Activated T-helper 2 cell treated with anti-CD3 and anti-CD28 coated beads, Interferon-gamma antibody, Interleukin-2, Interleukin-4, amounts not matched to agents 10 μg/mL and 5 μg/mL and 100 μg/mL, durations not matched to agents 14 hours and 24 hours and 36 hours (primary cell): ENCODE measurements at regions of chr13 and their contacts with region 1.

Region 1: DNA sequence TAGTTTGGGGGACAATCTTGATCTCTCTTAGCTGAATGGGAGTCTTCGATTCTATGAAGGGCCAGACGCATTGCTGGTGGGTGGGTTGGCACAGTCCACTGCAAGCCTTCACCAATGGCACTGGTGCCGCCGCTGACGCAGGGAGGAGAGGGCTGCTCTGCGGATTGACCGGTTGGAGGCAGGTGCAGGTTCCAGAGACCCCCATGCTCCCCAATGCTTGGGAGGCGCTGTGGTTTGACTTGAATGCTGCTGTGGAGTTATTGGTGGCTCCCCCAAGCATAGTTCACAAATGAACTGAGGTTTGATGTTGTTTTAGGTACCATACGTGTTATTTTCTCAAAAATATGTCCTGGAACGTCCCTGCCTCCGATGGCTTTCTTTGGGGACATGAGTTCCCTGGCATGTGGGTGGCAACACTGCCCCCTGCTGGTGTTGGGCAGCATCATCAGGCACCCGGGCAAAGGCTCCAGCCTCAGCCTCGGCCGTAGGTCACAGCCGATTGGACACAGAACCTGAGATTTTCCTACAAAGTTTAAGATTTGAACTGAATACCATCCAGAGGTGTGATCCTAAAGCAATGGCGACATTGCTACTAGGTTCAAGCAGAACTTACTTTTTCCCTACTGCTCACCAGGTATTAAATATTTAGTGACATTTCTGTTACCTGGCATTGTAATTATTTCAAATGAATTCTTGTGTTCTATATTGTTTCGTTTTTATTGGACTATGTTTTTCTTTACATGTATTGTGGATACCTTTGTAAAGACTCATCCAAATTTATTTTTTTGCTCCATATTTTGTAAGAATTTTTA is 95.5 kb downstream of the ANKRD10 start:
- DNase-seq: peak; percentile 58
- H3K4me3 Mint-ChIP-seq: no peak overlapping the region
- H3K27ac Mint-ChIP-seq: no peak overlapping the region
- H3K4me1 Mint-ChIP-seq: peaks cover 3% of the 10 kb centered on the region
- H3K27me3 Mint-ChIP-seq: peaks cover 10% of the 10 kb centered on the region

Region 2: DNA sequence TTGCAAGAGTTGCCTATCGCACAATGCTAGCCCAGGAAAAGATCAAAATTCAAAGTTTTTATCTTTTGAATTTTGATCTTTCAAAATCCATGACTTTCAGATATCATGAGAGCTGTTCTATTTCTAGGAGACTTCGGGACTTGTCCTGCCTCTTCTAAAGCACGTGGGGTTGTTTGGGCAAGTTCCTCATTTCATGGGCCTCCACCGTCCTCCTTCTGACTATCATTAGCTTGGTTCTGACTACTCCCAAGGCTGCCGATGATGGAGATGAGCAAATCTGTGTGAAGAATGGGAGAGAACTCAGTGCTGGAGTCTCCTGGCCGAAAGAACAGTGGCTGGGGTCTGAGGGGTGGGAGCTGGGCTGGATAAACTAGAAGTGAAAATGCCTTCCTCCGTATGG is 598.9 kb before region 1 on chr13:
- intact Hi-C with region 1: loop called (anchors 5 kb)
- DNase-seq: no peak
- H3K4me3 Mint-ChIP-seq: no peak overlapping the region
- H3K27ac Mint-ChIP-seq: no peak overlapping the region
- H3K4me1 Mint-ChIP-seq: no peaks in the 10 kb centered on the region
- H3K27me3 Mint-ChIP-seq: peaks cover 15% of the 10 kb centered on the region

Region 3: DNA sequence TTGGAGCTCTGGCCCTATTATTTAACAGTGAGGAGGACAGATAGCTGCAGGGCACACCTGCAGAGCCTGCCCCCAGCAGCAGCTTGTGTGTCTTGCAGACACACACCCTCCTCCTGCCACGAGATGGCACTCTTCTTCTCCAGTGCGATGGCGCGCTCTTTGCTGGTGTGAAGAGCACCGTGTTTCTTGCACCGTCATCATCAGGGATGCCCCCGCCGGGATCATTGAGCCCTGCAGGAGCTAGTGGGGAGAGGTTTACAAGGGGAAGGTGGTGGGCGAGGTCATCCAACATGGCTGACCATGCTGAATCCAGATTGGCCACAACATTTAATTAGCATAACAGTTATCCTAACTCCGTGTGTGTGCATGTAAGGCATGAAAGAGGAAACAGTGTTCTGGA is 363.5 kb before region 1 on chr13:
- intact Hi-C with region 1: loop called (anchors 2 kb)
- DNase-seq: peak; percentile 50
- H3K4me3 Mint-ChIP-seq: no peak overlapping the region
- H3K27ac Mint-ChIP-seq: no peak overlapping the region
- H3K4me1 Mint-ChIP-seq: peaks cover 3% of the 10 kb centered on the region
- H3K27me3 Mint-ChIP-seq: peaks cover 15% of the 10 kb centered on the region

Region 4: DNA sequence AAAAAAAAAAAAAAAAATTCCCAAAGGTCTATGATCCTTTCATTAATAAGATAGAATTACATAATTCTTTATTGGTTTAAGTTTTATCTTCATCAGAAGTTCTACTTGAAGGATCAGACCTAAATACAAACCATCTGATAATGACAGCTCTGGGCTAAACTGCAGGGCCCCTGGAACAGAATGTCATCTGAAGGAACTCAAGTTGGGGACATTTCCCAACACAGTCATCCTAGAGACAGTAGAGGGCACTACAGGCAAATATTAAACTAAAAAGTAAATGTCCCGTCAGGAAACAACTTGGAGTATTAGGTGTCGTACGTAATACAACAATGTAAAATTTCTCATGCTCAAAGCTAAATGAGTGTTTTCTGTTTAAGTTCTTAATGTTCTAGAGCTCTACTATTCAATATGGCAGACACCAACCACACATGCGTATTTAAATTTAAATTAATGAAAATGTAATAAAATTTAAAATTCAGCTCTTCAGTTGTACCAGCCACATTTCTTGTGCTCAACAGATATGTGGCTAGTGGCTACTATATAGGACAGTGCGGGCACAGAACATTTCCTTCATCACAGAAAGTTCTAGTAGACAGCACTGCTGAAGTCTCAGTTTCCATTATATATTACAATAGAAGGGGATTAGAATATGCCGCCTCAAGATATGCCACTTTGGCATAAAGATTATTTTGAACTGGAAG is 225.8 kb before region 1 on chr13:
- intact Hi-C with region 1: loop called (anchors 2 kb)
- DNase-seq: no peak
- H3K4me3 Mint-ChIP-seq: no peak overlapping the region
- H3K27ac Mint-ChIP-seq: no peak overlapping the region
- H3K4me1 Mint-ChIP-seq: peaks cover 1% of the 10 kb centered on the region
- H3K27me3 Mint-ChIP-seq: peaks cover 23% of the 10 kb centered on the region

Region 5: DNA sequence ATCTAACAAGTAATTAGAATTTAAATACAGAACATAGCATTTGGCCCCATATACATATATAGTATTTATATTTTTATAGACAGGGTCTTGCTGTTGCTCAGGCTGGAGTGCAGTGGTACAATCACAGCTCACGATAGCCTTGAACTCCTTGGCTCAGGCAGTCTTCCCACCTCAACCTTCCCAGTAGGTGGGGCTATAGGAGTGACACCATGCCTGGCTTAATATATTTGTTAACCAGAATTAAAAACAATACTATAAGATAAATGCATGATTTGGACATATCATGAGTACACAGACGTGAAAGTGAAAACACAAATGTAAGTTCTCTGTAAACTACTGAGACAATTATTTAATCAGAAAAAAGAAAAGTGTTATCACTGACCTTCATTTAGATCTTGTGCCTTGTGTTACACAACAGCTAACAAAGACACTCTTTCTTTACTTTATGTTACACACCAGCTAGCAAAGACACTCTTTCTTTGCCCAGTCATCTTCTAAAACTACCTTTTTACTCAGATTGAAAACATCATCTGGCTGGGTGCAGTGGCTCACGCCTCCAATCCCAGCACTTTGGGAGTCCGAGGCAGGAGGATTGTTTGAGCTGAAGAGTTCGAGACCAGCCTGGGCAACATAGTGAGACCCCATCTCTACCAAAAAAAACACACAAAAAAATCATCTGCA is 136.1 kb before region 1 on chr13:
- intact Hi-C with region 1: loop called (anchors 1 kb)
- DNase-seq: no peak
- H3K4me3 Mint-ChIP-seq: no peak overlapping the region
- H3K27ac Mint-ChIP-seq: no peak overlapping the region
- H3K4me1 Mint-ChIP-seq: no peaks in the 10 kb centered on the region
- H3K27me3 Mint-ChIP-seq: no peaks in the 10 kb centered on the region

Region 6: DNA sequence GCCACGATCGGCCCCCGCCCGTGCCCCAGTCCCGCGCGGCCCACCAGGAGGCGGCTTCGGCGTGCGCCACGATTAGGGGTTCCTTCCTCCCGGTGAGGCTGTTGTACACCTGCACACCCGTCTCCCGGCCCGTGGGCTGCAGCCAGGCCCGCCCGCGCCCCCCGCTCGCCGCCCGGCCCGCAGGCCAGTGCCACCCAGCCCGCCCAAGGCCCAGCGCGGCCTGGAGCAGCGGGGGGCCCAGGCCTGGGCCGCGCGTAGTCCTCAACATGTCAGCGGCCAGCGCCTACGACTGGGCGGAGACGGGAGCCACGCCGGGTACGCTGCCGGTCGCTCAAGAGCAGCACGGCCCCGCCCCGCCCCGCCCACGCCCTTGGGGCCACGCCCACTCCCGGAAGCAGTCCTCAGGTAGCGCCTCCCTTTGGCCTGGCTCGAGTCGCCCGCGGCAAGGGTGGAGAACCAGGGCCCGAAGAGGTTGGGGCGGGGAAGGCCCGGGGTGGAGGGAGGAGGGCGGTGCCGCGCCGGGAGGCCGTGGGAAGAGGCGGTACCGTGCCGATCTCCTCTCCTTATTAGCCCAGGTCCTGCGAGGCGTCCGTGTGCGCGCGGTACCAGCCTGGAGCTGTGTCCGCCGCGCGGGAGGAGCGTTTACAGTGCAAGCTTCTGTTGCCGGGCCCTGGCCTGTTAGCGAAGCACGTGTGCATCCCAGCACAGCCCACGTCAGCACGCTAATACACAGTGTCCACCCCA is 113.4 kb before region 1 on chr13 and contains the start of gene CARS2:
- intact Hi-C with region 1: loop called (anchors 1 kb)
- DNase-seq: peak; percentile 90
- H3K4me3 Mint-ChIP-seq: peak within 1 kb of the TSS; percentile 90
- H3K27ac Mint-ChIP-seq: peak within 1 kb of the TSS; percentile 86
- H3K4me1 Mint-ChIP-seq: peaks cover 33% of the 10 kb centered on the region
- H3K27me3 Mint-ChIP-seq: no peaks in the 10 kb centered on the region
- total RNA-seq, gene CARS2: 89.6 and 89.9 TPM in 2 replicates